ENCODE measurements at regions of chr12 and their contacts with region 1.

Region 1: DNA sequence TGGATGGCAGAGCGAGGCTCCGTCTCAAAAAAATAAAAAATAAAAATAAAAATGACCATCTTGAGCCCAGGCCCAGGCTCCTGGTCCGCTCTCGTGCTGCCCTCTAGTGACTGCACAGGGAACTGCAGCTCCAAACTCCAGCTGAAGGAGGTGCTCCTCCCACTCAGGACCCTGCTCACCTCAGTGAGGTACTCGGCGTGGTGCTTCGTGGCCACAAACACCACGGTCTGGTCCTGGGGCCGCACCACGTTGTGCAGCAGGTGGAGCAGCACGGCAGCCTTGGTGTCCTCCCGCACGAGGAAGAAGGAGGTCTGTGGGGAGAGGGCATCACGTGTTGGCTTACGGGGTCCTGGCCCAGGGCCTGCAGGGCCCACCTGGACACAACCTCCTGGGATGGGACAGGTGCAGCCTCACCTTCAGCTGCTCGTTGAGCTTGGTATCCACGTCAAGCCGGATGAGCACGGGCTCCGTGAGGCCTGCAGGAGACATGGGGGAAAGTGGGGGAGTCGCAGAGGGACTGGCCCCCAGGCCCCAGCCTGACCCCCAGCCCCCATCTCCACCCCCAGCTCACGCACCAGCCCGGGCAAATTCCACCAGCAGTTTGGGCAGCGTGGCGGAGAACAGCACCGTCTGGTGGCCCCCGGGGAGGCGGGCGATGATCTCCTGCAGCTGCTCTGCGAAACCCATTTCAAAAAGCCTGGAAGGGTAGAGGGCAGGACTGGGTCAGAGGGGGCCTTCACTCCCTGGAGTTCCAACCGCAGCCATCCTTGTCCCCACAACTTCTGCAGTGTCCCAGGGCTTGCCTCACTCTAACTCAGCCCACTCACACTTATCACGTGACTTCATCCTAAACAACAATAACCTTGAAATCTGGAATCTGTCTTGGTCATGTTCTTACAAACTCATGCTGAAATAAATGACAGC is 10.6 kb downstream of the DDX54 start:
- DNase-seq: peak; percentile 91
- H3K4me3 ChIP-seq: no peak overlapping the region
- H3K27ac ChIP-seq: no peak overlapping the region
- H3K4me1 ChIP-seq: no peaks in the 10 kb centered on the region
- H3K27me3 ChIP-seq: no peaks in the 10 kb centered on the region
- CTCF ChIP-seq: peak; percentile 95
- EP300 ChIP-seq: no peak
- RAD21 ChIP-seq: peak; percentile 88

Region 2: GRCh38 chr12:112686373-112686772 is 488.4 kb before region 1 on chr12:
- CTCF ChIA-PET with region 1: no interaction called
- POLR2A ChIA-PET with region 1: no interaction called
- DNase-seq: no peak
- H3K4me3 ChIP-seq: no peak overlapping the region
- H3K27ac ChIP-seq: no peak overlapping the region
- H3K4me1 ChIP-seq: peaks cover 0 to 5% of the 10 kb centered on the region in 2 experiments; a peak in 1 of 4 replicates
- H3K27me3 ChIP-seq: no peaks in the 10 kb centered on the region
- CTCF ChIP-seq: no peak
- EP300 ChIP-seq: no peak
- RAD21 ChIP-seq: no peak

Region 3: DNA sequence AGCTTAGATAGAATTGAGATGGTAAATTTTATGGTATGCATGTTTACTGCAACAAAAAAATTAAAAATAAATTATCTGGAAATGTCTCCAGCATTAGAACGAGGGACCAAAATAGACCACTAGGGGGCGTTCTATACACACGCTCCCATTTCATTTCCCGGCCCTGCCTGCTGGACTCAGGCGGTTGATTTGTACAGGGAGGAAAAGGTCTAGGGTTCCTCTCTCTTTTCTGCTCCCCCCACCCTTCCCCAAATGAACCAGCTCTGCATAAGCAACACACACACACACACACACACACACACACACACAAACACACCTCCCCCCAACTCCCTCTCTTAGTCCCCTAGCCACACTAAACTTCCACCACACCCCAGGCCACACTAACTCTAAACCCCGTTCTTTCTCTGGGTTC is 126.0 kb before region 1 on chr12:
- CTCF ChIA-PET with region 1: interaction called, 113 read pairs
- POLR2A ChIA-PET with region 1: no interaction called
- DNase-seq: peak; percentile 81
- H3K4me3 ChIP-seq: no peak overlapping the region; a peak in 1 of 4 replicates
- H3K27ac ChIP-seq: no peak overlapping the region
- H3K4me1 ChIP-seq: no peaks in the 10 kb centered on the region
- H3K27me3 ChIP-seq: 0 out of 2 replicates have a peak, but pooled peaks cover 7% of the 10 kb centered on the region
- CTCF ChIP-seq: peak; percentile 91
- EP300 ChIP-seq: no peak
- RAD21 ChIP-seq: peak; percentile 91

Region 4: GRCh38 chr12:113065126-113066007 is 109.4 kb before region 1 on chr12:
- CTCF ChIA-PET with region 1: interaction called, 15 read pairs
- POLR2A ChIA-PET with region 1: no interaction called
- DNase-seq: peak; percentile 63
- H3K4me3 ChIP-seq: no peak overlapping the region
- H3K27ac ChIP-seq: no peak overlapping the region
- H3K4me1 ChIP-seq: peaks cover 0 to 18% of the 10 kb centered on the region in 2 experiments; a peak in 1 of 4 replicates
- H3K27me3 ChIP-seq: no peaks in the 10 kb centered on the region
- CTCF ChIP-seq: no peak
- EP300 ChIP-seq: no peak
- RAD21 ChIP-seq: no peak

Region 5: GRCh38 chr12:113135178-113136127 is 39.3 kb before region 1 on chr12 and contains the start of gene RASAL1:
- CTCF ChIA-PET with region 1: interaction called, 13 read pairs
- POLR2A ChIA-PET with region 1: no interaction called
- DNase-seq: peak; percentile 81
- H3K4me3 ChIP-seq: no peak within 1 kb of the TSS; a peak in 1 of 4 replicates
- H3K27ac ChIP-seq: no peak within 1 kb of the TSS
- H3K4me1 ChIP-seq: no peaks in the 10 kb centered on the region; a peak in 1 of 4 replicates
- H3K27me3 ChIP-seq: no peaks in the 10 kb centered on the region
- CTCF ChIP-seq: peak; percentile 27; the same call in 1 of the 2 replicates
- EP300 ChIP-seq: no peak
- RAD21 ChIP-seq: no peak
- polyA plus RNA-seq, gene RASAL1: not detected in 2 replicates

Region 6: DNA sequence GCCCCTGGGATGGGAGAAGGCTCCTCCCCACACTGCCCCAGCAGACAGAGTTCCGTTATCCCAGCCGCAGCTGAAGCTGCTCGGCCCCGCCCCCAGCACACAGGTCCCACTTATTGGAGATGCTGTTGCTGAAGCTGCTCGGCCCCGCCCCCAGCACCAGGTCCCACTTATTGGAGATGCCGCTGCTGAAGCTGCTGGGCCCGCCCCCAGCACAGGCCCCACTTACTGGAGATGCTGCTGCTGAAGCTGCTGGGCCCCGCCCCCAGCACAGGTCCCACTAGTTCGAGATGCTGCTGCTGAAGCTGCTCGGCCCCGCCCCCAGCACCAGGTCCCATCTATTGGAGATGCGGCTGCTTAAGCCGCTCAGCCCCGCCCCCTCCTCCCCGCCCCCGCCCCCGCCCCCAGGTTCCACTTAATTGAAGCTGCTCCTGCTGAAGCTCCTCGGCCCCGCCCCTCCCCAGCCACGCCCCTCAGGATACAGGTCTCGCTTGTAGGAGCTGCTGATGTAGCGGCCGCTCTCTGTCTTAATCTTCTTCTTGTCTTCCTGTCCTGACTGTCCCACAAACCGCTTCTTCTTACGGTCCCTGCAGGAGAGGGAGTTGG is 13.2 kb before region 1 on chr12:
- CTCF ChIA-PET with region 1: interaction called, 39 read pairs
- POLR2A ChIA-PET with region 1: interaction called, 3 read pairs
- DNase-seq: peak; percentile 95
- H3K4me3 ChIP-seq: no peak overlapping the region; a peak in 1 of 4 replicates
- H3K27ac ChIP-seq: peak overlapping the region in 1 of 2 experiments; percentile 76; a peak in 2 of 4 replicates
- H3K4me1 ChIP-seq: peaks cover 7 to 23% of the 10 kb centered on the region in 2 experiments; a peak in 2 of 4 replicates
- H3K27me3 ChIP-seq: no peaks in the 10 kb centered on the region
- CTCF ChIP-seq: no peak
- EP300 ChIP-seq: no peak
- RAD21 ChIP-seq: no peak